H1 (cell line): ENCODE measurements at regions of chr1 and their contacts with region 1.

Region 1: GRCh38 chr1:108125312-108126138 is 74.6 kb downstream of the SLC25A24 start:
- DNase-seq: peak; percentile 60 to 62
- H3K4me3 ChIP-seq: no peak overlapping the region
- H3K27ac ChIP-seq: no peak overlapping the region
- H3K4me1 ChIP-seq: peaks cover 0 to 4% (median 0%) of the 10 kb centered on the region in 4 experiments; a peak in 1 of 7 replicates
- H3K27me3 ChIP-seq: no peaks in the 10 kb centered on the region
- CTCF ChIP-seq: peak; percentile 81 to 95 (median 90)
- EP300 ChIP-seq: no peak
- POLR2A ChIP-seq: no peak
- RAD21 ChIP-seq: peak; percentile 100

Region 2: GRCh38 chr1:107782217-107782845 is 343.2 kb before region 1 on chr1:
- CTCF ChIA-PET with region 1: interaction called, 433 read pairs
- POLR2A ChIA-PET with region 1: interaction called, 4 read pairs
- DNase-seq: no peak
- H3K4me3 ChIP-seq: no peak overlapping the region
- H3K27ac ChIP-seq: no peak overlapping the region
- H3K4me1 ChIP-seq: no peaks in the 10 kb centered on the region
- H3K27me3 ChIP-seq: no peaks in the 10 kb centered on the region
- CTCF ChIP-seq: peak in 2 of 3 experiments; percentile 39 to 53; a peak in 2 of 4 replicates
- EP300 ChIP-seq: no peak
- POLR2A ChIP-seq: no peak
- RAD21 ChIP-seq: peak; percentile 84 to 90

Region 3: DNA sequence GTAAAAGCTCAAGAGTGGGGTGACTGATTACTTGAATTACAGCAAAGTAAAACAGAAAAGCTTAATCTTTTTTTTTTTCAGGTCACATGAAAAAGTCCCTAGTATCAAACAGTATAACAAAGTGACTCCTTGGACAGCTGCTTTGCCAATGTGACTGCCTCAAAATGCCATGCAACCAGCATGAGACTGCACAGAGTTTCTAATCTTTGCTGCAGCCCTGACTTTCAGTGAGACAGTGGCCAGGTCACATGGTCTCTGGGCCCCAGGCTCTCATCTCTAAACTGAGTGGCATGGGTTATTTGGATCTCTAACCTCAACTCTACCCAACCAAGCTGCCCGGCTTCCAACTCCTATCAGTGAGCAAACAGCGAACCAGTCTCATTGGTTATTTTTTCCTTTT is 329.5 kb before region 1 on chr1:
- CTCF ChIA-PET with region 1: interaction called, 433 read pairs
- POLR2A ChIA-PET with region 1: interaction called, 3 read pairs
- DNase-seq: no peak
- H3K4me3 ChIP-seq: no peak overlapping the region
- H3K27ac ChIP-seq: no peak overlapping the region
- H3K4me1 ChIP-seq: no peaks in the 10 kb centered on the region
- H3K27me3 ChIP-seq: no peaks in the 10 kb centered on the region
- CTCF ChIP-seq: no peak
- EP300 ChIP-seq: no peak
- POLR2A ChIP-seq: no peak
- RAD21 ChIP-seq: no peak

Region 4: GRCh38 chr1:107997866-107998265 is 127.7 kb before region 1 on chr1:
- CTCF ChIA-PET with region 1: no interaction called
- POLR2A ChIA-PET with region 1: no interaction called
- DNase-seq: no peak
- H3K4me3 ChIP-seq: no peak overlapping the region
- H3K27ac ChIP-seq: no peak overlapping the region
- H3K4me1 ChIP-seq: peaks cover 0 to 6% (median 2%) of the 10 kb centered on the region in 4 experiments; a peak in 3 of 7 replicates
- H3K27me3 ChIP-seq: no peaks in the 10 kb centered on the region
- CTCF ChIP-seq: no peak
- EP300 ChIP-seq: no peak
- POLR2A ChIP-seq: no peak
- RAD21 ChIP-seq: no peak

Region 5: GRCh38 chr1:108049178-108049819 is 76.2 kb before region 1 on chr1:
- CTCF ChIA-PET with region 1: interaction called, 16 read pairs
- POLR2A ChIA-PET with region 1: no interaction called
- DNase-seq: peak in 1 of 2 experiments; percentile 55
- H3K4me3 ChIP-seq: no peak overlapping the region
- H3K27ac ChIP-seq: no peak overlapping the region
- H3K4me1 ChIP-seq: peaks cover 4 to 24% (median 20%) of the 10 kb centered on the region in 4 experiments
- H3K27me3 ChIP-seq: no peaks in the 10 kb centered on the region
- CTCF ChIP-seq: peak; percentile 46 to 73 (median 65)
- EP300 ChIP-seq: no peak
- POLR2A ChIP-seq: no peak
- RAD21 ChIP-seq: peak; percentile 30 to 43; a peak in 3 of 4 replicates

Region 6: GRCh38 chr1:108082738-108083481 is 42.6 kb before region 1 on chr1:
- CTCF ChIA-PET with region 1: interaction called, 12 read pairs
- POLR2A ChIA-PET with region 1: no interaction called
- DNase-seq: no peak
- H3K4me3 ChIP-seq: no peak overlapping the region
- H3K27ac ChIP-seq: no peak overlapping the region
- H3K4me1 ChIP-seq: no peaks in the 10 kb centered on the region
- H3K27me3 ChIP-seq: no peaks in the 10 kb centered on the region
- CTCF ChIP-seq: no peak
- EP300 ChIP-seq: no peak
- POLR2A ChIP-seq: no peak
- RAD21 ChIP-seq: no peak

Region 7: GRCh38 chr1:108141621-108142020 is 16.1 kb after region 1 on chr1:
- CTCF ChIA-PET with region 1: interaction called, 13 read pairs
- POLR2A ChIA-PET with region 1: no interaction called
- DNase-seq: no peak
- H3K4me3 ChIP-seq: no peak overlapping the region
- H3K27ac ChIP-seq: no peak overlapping the region
- H3K4me1 ChIP-seq: no peaks in the 10 kb centered on the region
- H3K27me3 ChIP-seq: no peaks in the 10 kb centered on the region
- CTCF ChIP-seq: no peak
- EP300 ChIP-seq: no peak
- POLR2A ChIP-seq: no peak
- RAD21 ChIP-seq: no peak

Region 8: GRCh38 chr1:108208724-108209429 is 83.4 kb after region 1 on chr1:
- CTCF ChIA-PET with region 1: no interaction called
- POLR2A ChIA-PET with region 1: no interaction called
- DNase-seq: no peak
- H3K4me3 ChIP-seq: no peak overlapping the region
- H3K27ac ChIP-seq: 0 out of 2 replicates have a peak overlapping the region, but pooled peaks have one; percentile 0
- H3K4me1 ChIP-seq: no peaks in the 10 kb centered on the region; a peak in 1 of 7 replicates
- H3K27me3 ChIP-seq: no peaks in the 10 kb centered on the region
- CTCF ChIP-seq: no peak
- EP300 ChIP-seq: no peak
- POLR2A ChIP-seq: no peak
- RAD21 ChIP-seq: no peak